Sigmoid colon (tissue), 7 donors: ENCODE measurements at regions of chr4 and their contacts with region 1.

Region 1: DNA sequence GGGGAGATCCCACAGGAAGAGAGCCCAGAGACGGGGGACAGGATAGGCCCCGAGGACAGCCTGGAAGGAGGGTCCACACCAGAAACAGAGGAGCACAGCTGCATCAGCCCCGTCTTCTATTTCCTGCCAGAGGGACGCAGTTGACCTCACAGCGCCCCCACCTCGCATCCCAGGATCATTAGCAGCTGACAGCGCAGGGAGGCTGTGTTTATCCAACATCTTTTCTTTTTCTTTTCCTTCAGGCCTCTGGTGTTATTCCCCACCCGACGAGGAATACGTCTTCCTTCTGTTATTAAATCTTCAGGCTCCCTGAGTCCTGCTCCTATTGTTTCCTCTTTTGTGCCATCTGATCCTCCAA is 75.4 kb downstream of the DCHS2 start:
- DNase-seq: peak; percentile 77
- H3K4me3 ChIP-seq: peak overlapping the region; percentile 25 to 56 (median 46)
- H3K27ac ChIP-seq: peak overlapping the region; percentile 73 to 89 (median 86)
- H3K4me1 ChIP-seq: peaks cover 0 to 34% (median 15%) of the 10 kb centered on the region in 4 donors
- H3K27me3 ChIP-seq: no peaks in the 10 kb centered on the region
- CTCF ChIP-seq: no peak
- EP300 ChIP-seq: no peak
- POLR2A ChIP-seq: no peak

Region 2: DNA sequence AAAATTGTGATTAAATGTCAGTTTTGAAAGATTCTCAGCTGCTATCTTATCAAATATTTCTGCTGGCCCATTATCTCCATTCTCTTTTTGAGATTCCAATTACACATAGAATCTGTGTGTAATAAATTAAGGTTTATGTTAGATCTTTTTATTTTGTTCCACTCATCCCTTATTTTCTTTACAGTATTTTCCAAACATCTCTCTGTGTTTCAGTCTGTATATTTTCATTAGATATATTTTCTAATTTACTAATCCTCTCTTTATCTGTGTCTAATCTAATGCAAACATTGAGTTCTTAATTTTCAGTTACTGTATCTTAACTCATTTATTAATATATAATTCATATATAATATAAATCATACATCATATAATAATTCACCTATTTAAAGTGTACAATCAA is 193.3 kb before region 1 on chr4:
- intact Hi-C with region 1: no loop called
- DNase-seq: no peak
- H3K4me3 ChIP-seq: no peak overlapping the region
- H3K27ac ChIP-seq: no peak overlapping the region
- H3K4me1 ChIP-seq: no peaks in the 10 kb centered on the region
- H3K27me3 ChIP-seq: no peaks in the 10 kb centered on the region
- CTCF ChIP-seq: no peak
- EP300 ChIP-seq: no peak
- POLR2A ChIP-seq: no peak

Region 3: DNA sequence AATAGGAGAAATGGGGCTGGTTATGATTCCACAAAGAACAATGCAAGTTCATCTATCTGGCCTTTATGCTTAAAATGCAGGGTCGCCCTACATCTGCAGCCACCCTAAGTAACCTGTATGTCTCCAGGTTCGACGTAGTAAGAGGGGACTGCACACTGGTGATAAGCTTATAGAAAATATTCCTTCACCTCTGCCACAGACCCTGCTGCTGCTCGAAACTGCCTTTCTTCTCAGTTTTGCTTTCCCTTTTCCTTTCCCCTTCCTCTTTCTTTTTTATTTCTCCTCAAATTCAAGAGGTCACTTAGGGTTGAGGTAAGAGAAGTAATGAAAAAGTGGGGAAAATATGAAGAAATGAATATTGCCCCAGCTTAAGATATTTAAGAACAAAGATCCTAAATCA is 48.1 kb before region 1 on chr4:
- intact Hi-C with region 1: loop called (anchors 5 kb)
- DNase-seq: no peak
- H3K4me3 ChIP-seq: no peak overlapping the region
- H3K27ac ChIP-seq: peak overlapping the region in 1 of 4 donors; percentile 59
- H3K4me1 ChIP-seq: peaks cover 0 to 46% (median 32%) of the 10 kb centered on the region in 4 donors
- H3K27me3 ChIP-seq: no peaks in the 10 kb centered on the region
- CTCF ChIP-seq: no peak
- EP300 ChIP-seq: no peak
- POLR2A ChIP-seq: no peak

Region 4: DNA sequence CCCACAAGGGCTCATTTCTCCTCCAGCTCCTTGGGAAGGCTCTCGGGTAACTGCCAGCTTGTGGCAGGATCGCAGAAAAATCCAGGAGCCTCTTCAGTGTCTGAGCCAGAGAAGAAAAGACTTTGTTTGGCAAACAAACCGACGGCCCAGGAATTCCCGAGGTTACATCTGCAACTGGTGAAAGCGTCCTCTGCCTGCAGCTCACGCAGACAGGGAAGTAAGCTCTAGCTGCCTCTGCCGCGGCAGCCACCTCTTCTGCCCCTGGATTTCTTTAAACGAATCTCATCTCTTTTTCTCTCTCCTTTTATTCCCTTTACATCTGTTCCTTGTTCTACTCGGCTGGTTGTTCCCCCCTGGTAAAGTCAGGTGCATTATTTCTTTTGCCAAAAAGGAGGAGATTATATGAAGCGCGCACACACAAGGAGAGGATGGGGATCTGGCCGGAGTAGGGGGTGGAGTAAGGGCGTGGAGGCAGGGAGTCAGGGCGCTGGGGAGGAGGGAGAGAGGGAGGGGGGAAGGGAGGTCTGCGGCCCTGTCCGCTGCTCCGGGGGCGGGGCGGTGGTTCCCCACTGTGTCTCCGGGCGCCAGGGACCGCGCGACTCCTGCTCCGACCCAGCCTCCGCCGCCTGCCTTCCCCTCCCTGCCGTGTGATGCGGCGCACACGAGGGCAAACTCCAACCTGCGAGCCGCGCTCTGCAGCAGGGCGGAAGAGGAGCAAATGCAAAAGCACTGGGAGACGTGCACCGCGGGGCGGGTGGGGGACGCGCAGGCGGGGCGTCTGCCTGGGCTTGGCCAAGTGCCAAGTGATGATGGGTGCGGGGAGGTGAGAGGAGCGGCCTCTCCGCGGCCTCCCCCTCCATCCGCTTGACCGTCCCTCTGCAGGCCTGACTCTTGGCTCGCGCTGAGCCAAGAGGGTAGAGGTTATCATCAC is 75.4 kb after region 1 on chr4 and contains the start of gene DCHS2:
- intact Hi-C with region 1: loop called (anchors 2 kb)
- DNase-seq: peak; percentile 78
- H3K4me3 ChIP-seq: peak within 1 kb of the TSS; percentile 46 to 57 (median 52)
- H3K27ac ChIP-seq: peak within 1 kb of the TSS in 3 of 4 donors; percentile 60 to 77 (median 76)
- H3K4me1 ChIP-seq: peaks cover 0 to 36% (median 19%) of the 10 kb centered on the region in 4 donors
- H3K27me3 ChIP-seq: peaks cover 0 to 10% (median 0%) of the 10 kb centered on the region in 3 donors
- CTCF ChIP-seq: no peak
- EP300 ChIP-seq: no peak
- POLR2A ChIP-seq: no peak
- total RNA-seq, gene DCHS2: 13.6 to 24.1 (median 17.2) TPM